ENCODE measurements at regions of chr7 and their contacts with region 1.

Region 1: DNA sequence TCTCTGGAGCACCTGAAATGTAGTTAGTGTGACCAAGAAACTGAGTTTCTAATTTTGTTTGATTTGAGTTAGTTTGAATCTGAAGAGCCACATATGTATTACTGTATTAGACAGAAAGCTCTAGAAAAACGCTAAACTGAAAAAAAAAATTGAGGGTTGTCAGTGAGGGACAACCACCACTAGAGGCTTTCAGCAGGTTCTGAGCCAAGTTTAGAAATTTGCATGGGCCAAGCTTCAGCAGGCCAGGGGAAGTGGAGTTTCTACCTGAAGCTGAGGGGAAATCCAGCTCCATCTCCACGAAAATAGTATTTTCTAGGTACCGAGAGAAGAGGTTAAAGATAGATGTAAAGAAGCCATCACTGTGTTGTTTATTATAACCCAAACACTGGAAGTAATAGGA is 77.9 kb upstream of the PLXNA4 start:
- DNase-seq: peak; percentile 47 to 75 (median 63)
- H3K4me3 ChIP-seq: no peak overlapping the region
- H3K27ac ChIP-seq: no peak overlapping the region
- H3K4me1 ChIP-seq: peaks cover 11 to 50% (median 41%) of the 10 kb centered on the region in 4 experiments
- H3K27me3 ChIP-seq: no peaks in the 10 kb centered on the region

Region 2: DNA sequence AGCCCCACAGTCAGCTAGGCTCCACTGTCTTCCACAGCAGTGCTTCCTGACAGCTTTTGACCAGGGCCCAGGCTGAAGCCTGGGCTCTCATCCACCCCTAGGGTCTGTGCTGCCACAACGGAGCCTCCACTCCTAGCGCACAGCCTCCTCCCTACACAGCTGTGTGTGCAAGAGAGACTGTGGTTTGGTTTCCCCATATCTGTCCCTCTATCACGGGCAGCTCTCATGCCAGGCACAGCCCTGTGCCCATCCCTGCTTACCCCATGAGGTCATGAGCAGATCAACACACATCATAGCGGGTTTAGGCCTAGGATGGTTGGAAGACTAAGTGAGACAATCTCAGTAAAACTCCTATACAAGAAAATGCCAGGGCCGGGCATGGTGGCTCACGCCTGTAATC is 16.1 kb before region 1 on chr7:
- CTCF ChIA-PET with region 1: interaction called, 10 read pairs
- POLR2A ChIA-PET with region 1: interaction called, 3 read pairs
- DNase-seq: peak in 1 of 3 donors; percentile 10
- H3K4me3 ChIP-seq: no peak overlapping the region
- H3K27ac ChIP-seq: no peak overlapping the region
- H3K4me1 ChIP-seq: no peaks in the 10 kb centered on the region
- H3K27me3 ChIP-seq: no peaks in the 10 kb centered on the region

Region 3: GRCh38 chr7:132773527-132773956 is 119.4 kb after region 1 on chr7:
- CTCF ChIA-PET with region 1: no interaction called
- POLR2A ChIA-PET with region 1: no interaction called
- DNase-seq: peak in 2 of 3 donors; percentile 33 to 40
- H3K4me3 ChIP-seq: no peak overlapping the region
- H3K27ac ChIP-seq: no peak overlapping the region
- H3K4me1 ChIP-seq: peaks cover 0 to 17% (median 9%) of the 10 kb centered on the region in 4 experiments
- H3K27me3 ChIP-seq: no peaks in the 10 kb centered on the region